ENCODE measurements at regions of chr2 and their contacts with region 1.

Region 1: DNA sequence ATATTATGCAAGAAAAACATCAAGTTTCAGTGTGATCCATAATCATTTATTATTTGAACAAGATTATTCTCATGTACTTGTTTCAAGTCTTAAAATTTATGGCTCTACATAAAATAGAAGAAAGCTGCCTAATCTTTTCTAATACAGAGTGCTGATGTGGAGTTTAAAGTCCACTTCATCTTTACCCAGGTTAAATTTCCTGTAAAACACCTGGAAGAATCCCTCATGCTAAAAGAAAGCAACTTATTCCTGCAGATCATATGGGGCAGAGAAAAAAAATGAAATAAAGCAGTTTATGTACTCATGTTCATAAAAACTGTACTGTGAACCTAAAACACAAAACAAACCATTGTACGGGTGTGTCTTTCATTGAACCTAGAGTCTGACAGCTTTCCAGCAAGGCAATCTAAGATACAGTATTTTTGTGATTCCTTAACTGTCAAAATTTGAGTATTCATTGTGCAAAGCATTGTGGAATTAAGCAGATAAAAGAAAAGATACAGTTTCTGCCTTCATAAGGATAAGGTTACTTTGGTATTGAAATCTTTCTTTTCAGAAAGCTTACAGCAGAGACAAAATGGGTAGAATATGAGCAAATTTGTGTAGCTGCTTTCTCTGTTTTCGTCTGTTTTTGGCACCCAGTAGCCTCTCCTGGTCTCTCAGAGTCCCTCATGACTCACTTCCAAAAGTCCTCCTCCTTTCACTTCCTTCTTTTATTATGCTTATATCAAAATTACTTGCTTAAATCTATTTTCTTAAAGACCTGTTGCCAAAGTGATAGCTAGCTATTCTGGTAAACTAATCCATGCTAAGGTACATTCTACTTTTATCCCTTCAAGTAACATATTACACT is 26.9 kb upstream of the GLS start:
- DNase-seq: no peak
- ATAC-seq: peak in 1 of 8 donors; percentile 38
- H3K4me3 ChIP-seq: no peak overlapping the region
- H3K27ac ChIP-seq: peak overlapping the region in 2 of 10 donors; percentile 1 to 36
- H3K4me1 ChIP-seq: peaks cover 0 to 15% (median 2%) of the 10 kb centered on the region in 9 donors
- H3K27me3 ChIP-seq: no peaks in the 10 kb centered on the region
- CTCF ChIP-seq: no peak

Region 2: GRCh38 chr2:190947711-190948251 is 94.0 kb after region 1 on chr2:
- intact Hi-C with region 1: loop called in 1 of 10 experiments (anchors 10 kb)
- DNase-seq: no peak
- ATAC-seq: peak in 7 of 8 donors; percentile 48 to 75 (median 66)
- H3K4me3 ChIP-seq: peak overlapping the region in 5 of 10 donors; percentile 5 to 33 (median 21)
- H3K27ac ChIP-seq: peak overlapping the region in 7 of 10 donors; percentile 8 to 63 (median 35)
- H3K4me1 ChIP-seq: peaks cover 10 to 41% (median 28%) of the 10 kb centered on the region in 9 donors
- H3K27me3 ChIP-seq: no peaks in the 10 kb centered on the region
- CTCF ChIP-seq: peak in 3 of 9 donors; percentile 19 to 22 (median 21)

Region 3: GRCh38 chr2:190996338-190996946 is 142.7 kb after region 1 on chr2:
- intact Hi-C with region 1: loop called in 1 of 10 experiments (anchors 10 kb)
- DNase-seq: no peak
- ATAC-seq: peak in 6 of 8 donors; percentile 41 to 78 (median 56)
- H3K4me3 ChIP-seq: no peak overlapping the region
- H3K27ac ChIP-seq: no peak overlapping the region
- H3K4me1 ChIP-seq: peaks cover 0 to 24% (median 0%) of the 10 kb centered on the region in 9 donors
- H3K27me3 ChIP-seq: no peaks in the 10 kb centered on the region
- CTCF ChIP-seq: peak; percentile 24 to 64 (median 60)

Region 4: DNA sequence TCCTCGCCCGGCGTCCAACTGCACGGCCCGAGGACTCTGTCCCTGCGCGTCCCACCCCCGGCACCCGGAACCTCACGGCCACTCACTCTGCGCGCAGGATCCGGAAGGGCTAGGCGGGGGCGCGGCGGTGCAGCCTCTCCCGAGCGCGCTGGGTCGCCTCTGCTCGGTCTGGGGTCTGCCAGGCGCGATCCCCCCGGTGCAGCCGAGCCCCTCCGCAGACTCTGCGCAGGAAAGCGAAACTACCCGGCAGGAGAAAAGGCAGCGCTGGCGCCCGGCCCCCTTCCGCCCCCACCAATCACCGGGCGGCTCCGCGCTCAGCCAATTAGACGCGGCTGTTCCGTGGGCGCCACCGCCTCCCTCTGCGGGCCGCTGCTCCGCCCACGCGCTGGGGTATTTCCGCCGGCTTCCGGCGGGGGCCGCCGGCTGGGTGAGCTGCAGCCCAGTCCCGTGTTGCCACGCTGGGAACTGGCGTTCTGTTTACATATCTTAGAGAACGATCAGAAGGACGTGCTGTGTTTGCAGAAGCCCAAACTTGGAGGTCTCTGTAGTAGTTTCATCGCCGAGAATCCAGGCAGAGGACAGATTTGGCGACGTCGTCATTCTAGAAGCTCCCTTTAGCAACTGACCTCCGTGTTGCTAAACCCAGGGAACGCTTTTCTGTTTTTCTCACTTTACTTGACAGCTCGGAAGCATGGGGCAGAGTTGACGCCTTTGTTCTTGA is 160.3 kb after region 1 on chr2 and contains the start of gene STAT1:
- intact Hi-C with region 1: loop called in 1 of 10 experiments (anchors 5 kb)
- DNase-seq: peak; percentile 93 to 96
- ATAC-seq: peak; percentile 96 to 98 (median 97)
- H3K4me3 ChIP-seq: peak within 1 kb of the TSS; percentile 67 to 98 (median 84)
- H3K27ac ChIP-seq: peak within 1 kb of the TSS; percentile 83 to 97 (median 93)
- H3K4me1 ChIP-seq: peaks cover 0 to 70% (median 32%) of the 10 kb centered on the region in 9 donors
- H3K27me3 ChIP-seq: no peaks in the 10 kb centered on the region
- CTCF ChIP-seq: peak in 6 of 9 donors; percentile 5 to 17 (median 10)
- total RNA-seq, gene STAT1: 35.9 to 438 (median 52.4) TPM

Region 5: DNA sequence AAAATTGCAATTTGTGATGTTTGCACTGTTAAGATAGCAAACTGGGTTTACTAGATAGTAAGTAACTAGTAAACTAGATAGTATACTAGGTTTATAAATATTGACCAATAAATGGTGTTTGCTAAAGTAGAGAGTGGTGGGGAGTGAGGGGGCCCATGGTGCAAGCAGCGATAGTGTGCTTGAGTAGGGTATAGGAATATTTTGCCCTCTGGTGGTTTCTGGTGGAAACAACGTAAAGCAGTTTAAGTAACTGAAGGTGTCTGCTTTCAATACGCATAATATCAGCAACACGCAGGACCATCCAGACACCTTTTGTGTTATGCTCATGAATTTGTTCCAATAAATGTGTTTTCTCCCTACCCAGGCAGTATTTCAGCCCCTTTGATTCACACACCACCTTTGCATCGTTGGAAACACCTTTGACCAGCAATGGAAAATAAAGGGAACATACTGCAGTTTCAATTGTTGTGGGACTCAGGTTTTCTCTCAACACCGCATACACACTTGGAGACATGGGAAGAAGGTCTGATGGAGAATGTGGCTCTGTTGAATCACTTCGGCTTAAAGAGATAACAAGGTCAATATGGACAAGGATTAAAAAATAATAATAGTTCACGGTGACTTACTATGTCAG is 176.9 kb after region 1 on chr2:
- intact Hi-C with region 1: loop called in 3 of 10 experiments (anchors 5 to 10 kb)
- DNase-seq: no peak
- ATAC-seq: peak in 6 of 8 donors; percentile 49 to 76 (median 66)
- H3K4me3 ChIP-seq: no peak overlapping the region
- H3K27ac ChIP-seq: peak overlapping the region in 1 of 10 donors; percentile 52
- H3K4me1 ChIP-seq: peaks cover 0 to 61% (median 6%) of the 10 kb centered on the region in 9 donors
- H3K27me3 ChIP-seq: peaks cover 0 to 3% (median 0%) of the 10 kb centered on the region in 7 donors
- CTCF ChIP-seq: peak; percentile 21 to 72 (median 62)

Measured in heart right ventricle (tissue), 16 donors.